ENCODE measurements at regions of chr7 and their contacts with region 1.

Region 1: GRCh38 chr7:147968046-147968610 is 622.4 kb upstream of the C7orf33 start:
- DNase-seq: no peak
- H3K4me3 ChIP-seq: no peak overlapping the region
- CTCF ChIP-seq: no peak

Region 2: DNA sequence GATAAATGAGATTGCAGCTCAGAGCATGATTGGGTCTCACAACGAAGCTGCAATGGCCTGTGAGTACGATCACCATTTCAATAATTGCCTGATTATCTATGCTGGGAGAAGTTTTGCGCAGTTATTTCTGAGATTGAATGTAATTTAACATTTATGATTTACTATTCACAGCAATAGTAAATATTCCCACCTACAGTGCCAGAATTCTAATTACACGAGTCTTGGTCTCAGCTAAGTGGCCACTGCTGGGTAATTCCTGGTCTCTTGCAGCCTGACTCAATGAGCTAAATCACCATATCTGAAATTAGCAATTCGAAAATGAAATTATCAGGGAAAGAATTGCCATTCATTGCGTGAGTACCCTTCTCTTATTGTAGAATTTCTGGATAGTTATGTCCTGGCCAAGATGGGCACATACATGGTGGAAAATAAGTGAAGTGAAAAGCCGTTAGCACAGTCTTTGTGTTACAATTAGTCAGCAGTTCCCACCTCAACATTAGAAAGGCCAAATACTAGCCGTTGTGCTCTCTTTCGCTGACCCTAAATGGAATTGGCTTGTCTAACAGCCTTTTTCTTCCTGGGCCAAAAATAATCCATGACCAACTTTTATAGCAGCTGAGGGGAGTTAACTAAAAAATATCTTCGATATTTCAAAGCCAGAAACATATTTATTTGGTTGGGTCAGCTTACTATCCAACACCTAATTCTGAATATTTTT is 58.5 kb before region 1 on chr7:
- in situ Hi-C with region 1: loop called (anchors 5 kb)
- DNase-seq: no peak
- H3K4me3 ChIP-seq: no peak overlapping the region
- CTCF ChIP-seq: no peak

Region 3: GRCh38 chr7:147930579-147930978 is 37.5 kb before region 1 on chr7:
- in situ Hi-C with region 1: no loop called
- DNase-seq: no peak
- H3K4me3 ChIP-seq: no peak overlapping the region
- CTCF ChIP-seq: no peak

Region 4: GRCh38 chr7:148142660-148143248 is 174.6 kb after region 1 on chr7:
- in situ Hi-C with region 1: no loop called
- DNase-seq: no peak
- H3K4me3 ChIP-seq: no peak overlapping the region
- CTCF ChIP-seq: peak; percentile 41